Activated naive CD4-positive, alpha-beta T cell treated with anti-CD3 and anti-CD28 coated beads, Interleukin-2, amount 10 ng/mL, durations not matched to agents 7 days and 5 days (primary cell): ENCODE measurements at regions of chr22 and their contacts with region 1.

Region 1: GRCh38 chr22:17785185-17786184 is 11.2 kb upstream of the BID start:
- DNase-seq: peak; percentile 80
- H3K4me3 Mint-ChIP-seq: no peak overlapping the region
- H3K27ac Mint-ChIP-seq: no peak overlapping the region
- H3K4me1 Mint-ChIP-seq: peaks cover 21% of the 10 kb centered on the region
- H3K27me3 Mint-ChIP-seq: no peaks in the 10 kb centered on the region

Region 2: DNA sequence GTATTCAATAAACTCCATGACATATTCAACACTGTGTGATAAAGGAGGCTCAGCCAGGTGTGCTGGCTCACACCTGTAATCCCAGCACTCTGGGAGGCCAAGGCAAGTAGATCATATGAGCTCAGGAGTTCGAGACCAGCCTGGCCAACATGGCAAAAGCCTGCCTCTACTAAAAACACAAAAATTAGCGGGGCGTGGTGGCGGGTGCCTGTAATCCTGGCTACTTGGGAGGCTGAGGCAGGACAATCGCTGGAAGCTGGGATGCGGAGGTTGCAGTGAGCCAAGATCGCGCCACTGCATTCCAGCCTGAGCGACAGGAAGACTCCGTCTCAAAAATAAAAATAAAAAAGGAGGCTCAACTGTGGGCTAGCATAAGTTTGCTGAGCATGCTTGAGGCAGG is 226.3 kb before region 1 on chr22:
- CTCF ChIA-PET with region 1: interaction called, 11 read pairs
- DNase-seq: no peak
- H3K4me3 Mint-ChIP-seq: no peak overlapping the region
- H3K27ac Mint-ChIP-seq: no peak overlapping the region
- H3K4me1 Mint-ChIP-seq: no peaks in the 10 kb centered on the region
- H3K27me3 Mint-ChIP-seq: peaks cover 14% of the 10 kb centered on the region

Region 3: GRCh38 chr22:17742527-17742902 is 43.0 kb before region 1 on chr22:
- CTCF ChIA-PET with region 1: interaction called, 88 read pairs
- DNase-seq: peak; percentile 75
- H3K4me3 Mint-ChIP-seq: no peak overlapping the region
- H3K27ac Mint-ChIP-seq: no peak overlapping the region
- H3K4me1 Mint-ChIP-seq: peaks cover 12% of the 10 kb centered on the region
- H3K27me3 Mint-ChIP-seq: no peaks in the 10 kb centered on the region

Region 4: DNA sequence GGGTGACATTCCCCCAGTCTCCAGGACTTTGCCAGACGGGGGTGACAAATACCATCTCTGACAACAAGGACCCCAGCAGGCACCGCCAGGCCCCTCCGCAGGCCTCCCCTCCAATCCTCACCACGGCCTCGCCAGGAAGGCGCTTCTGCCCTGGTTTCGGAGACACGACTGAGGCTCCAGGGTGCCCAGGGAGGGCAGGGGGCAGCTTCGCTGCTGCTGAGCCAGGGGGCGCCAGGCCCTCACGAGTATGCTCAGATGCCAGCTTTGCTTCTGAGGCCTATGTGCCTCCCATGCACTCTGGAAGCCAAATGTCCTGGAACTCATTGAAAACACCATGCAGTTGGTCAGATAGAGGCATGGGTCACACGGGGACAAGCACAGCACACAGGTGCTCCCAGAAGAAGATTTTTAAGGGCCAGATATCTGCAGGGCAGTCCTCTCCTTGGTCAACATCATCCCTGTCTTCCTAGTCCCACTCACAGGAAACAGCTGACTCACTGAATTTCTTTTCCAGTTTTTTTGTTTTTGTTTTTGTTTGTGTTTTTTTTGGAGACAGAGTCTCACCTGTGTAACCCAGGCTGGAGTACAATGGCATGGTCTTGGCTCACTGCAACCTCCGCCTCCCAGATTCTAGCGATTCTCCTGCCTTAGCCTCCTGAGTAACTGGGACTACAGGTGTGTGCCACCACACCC is 31.1 kb before region 1 on chr22:
- CTCF ChIA-PET with region 1: interaction called, 12 read pairs
- DNase-seq: peak; percentile 50
- H3K4me3 Mint-ChIP-seq: no peak overlapping the region
- H3K27ac Mint-ChIP-seq: no peak overlapping the region
- H3K4me1 Mint-ChIP-seq: peaks cover 2% of the 10 kb centered on the region
- H3K27me3 Mint-ChIP-seq: no peaks in the 10 kb centered on the region

Region 5: DNA sequence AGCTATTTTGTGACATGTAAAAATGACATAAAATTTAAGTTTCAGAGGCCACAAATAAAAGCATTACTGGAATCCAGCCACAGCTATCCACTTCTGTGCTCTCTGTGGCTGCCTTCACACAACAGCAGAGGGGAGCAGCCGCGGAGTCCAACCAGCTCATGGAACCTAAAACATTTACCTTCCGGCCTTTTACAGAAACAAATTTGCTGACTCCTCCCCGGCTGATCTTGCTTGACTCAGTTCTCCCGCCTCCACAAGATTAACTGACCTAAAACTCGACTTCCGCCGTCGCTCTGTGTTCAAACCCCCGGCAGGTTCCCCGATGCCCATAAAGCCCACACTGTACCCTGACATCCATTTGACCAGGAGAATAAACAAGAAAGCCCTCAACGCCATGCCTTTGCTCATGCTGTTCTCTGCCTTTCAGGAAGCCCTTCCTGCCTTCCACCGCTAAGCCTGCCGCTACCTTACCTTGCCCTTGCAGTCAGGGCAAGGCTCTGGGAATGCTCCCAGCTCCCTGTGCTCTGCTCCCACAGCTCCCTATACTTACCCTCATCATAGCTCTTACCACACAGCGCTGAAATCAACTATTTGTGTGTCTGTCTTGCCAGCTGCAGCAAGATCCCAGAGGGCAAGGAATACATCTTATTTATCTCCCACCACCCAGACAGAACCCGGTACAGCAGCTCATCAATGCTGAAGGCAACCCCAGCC is 203.5 kb after region 1 on chr22:
- CTCF ChIA-PET with region 1: no interaction called
- DNase-seq: no peak
- H3K4me3 Mint-ChIP-seq: no peak overlapping the region
- H3K27ac Mint-ChIP-seq: no peak overlapping the region
- H3K4me1 Mint-ChIP-seq: peaks cover 14% of the 10 kb centered on the region
- H3K27me3 Mint-ChIP-seq: no peaks in the 10 kb centered on the region

Region 6: GRCh38 chr22:18077639-18078328 is 292.3 kb after region 1 on chr22 and contains the start of gene PEX26:
- CTCF ChIA-PET with region 1: interaction called, 19 read pairs
- DNase-seq: peak; percentile 98
- H3K4me3 Mint-ChIP-seq: peak within 1 kb of the TSS; percentile 84
- H3K27ac Mint-ChIP-seq: peak within 1 kb of the TSS; percentile 92
- H3K4me1 Mint-ChIP-seq: peaks cover 55% of the 10 kb centered on the region
- H3K27me3 Mint-ChIP-seq: no peaks in the 10 kb centered on the region